ENCODE measurements at regions of chr1 and their contacts with region 1.

Region 1: DNA sequence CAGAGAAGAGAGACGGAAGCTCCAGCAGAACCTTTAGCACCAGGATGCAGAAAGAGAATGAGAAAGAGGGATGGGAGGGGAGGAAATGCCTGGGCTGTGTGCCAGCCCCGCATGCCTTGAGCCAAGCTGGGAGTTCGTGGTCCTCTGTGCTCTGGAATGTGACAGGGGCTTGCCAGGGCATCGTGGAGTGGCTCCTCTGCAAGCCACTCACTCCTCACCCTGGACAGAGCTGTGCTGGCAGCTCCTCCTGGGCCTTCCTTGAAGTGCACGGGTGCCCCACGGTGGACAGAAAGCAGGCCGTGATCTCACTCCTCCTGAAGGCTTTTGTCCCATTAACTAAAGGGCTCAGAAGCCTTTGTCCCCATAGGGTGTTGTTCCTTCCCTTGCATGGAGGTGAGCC is 34.8 kb upstream of the PRELP start:
- DNase-seq: peak; percentile 95
- H3K4me3 ChIP-seq: no peak overlapping the region
- H3K27ac ChIP-seq: peak overlapping the region; percentile 34 to 68 (median 53)
- H3K4me1 ChIP-seq: peaks cover 0 to 33% (median 29%) of the 10 kb centered on the region in 4 donors
- H3K27me3 ChIP-seq: no peaks in the 10 kb centered on the region
- CTCF ChIP-seq: peak; percentile 69 to 83 (median 76)
- EP300 ChIP-seq: no peak
- POLR2A ChIP-seq: no peak

Region 2: GRCh38 chr1:203267347-203267846 is 173.4 kb before region 1 on chr1:
- intact Hi-C with region 1: loop called (anchors 1 kb)
- DNase-seq: peak; percentile 93
- H3K4me3 ChIP-seq: peak overlapping the region; percentile 32 to 58 (median 57)
- H3K27ac ChIP-seq: peak overlapping the region; percentile 77 to 89 (median 86)
- H3K4me1 ChIP-seq: peaks cover 0 to 20% (median 6%) of the 10 kb centered on the region in 4 donors
- H3K27me3 ChIP-seq: no peaks in the 10 kb centered on the region
- CTCF ChIP-seq: peak; percentile 87 to 95 (median 92)
- EP300 ChIP-seq: no peak
- POLR2A ChIP-seq: no peak

Region 3: DNA sequence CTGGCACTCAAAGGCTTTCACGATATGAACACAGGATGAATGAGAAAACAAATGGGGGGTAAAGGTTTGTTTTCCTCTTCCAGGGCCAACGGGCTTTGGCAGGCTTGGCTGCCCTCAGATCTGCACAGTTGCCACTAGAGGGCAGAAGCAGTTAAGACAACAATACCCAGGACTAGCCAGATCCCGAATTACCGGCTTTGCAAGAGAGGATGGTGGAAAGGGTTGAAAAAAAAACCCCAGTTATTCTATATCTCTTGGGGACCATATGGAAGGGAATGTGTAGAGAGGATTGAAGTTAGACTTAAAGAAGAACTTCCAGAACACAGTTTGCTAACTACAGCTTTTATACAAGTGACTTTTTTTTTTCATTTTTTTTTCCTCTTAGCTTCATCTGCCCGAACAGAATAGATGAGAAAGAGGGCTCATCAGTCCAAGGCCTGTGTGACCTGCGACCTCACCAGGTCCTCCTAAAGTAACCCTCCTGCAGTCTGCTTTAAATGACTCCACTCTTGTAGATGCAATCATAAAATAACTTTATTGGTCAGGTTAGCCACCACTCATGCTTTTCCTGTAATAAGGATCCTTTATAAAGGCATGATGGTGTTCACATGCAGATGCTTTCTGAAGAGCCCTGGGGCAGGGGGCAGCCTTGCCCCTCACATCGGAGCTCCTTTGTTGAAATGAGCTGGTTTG is 100.5 kb before region 1 on chr1:
- intact Hi-C with region 1: loop called (anchors 1 kb)
- DNase-seq: peak; percentile 89
- H3K4me3 ChIP-seq: no peak overlapping the region
- H3K27ac ChIP-seq: no peak overlapping the region
- H3K4me1 ChIP-seq: peaks cover 0 to 15% (median 7%) of the 10 kb centered on the region in 4 donors
- H3K27me3 ChIP-seq: no peaks in the 10 kb centered on the region
- CTCF ChIP-seq: peak; percentile 82 to 90 (median 86)
- EP300 ChIP-seq: no peak
- POLR2A ChIP-seq: no peak

Region 4: DNA sequence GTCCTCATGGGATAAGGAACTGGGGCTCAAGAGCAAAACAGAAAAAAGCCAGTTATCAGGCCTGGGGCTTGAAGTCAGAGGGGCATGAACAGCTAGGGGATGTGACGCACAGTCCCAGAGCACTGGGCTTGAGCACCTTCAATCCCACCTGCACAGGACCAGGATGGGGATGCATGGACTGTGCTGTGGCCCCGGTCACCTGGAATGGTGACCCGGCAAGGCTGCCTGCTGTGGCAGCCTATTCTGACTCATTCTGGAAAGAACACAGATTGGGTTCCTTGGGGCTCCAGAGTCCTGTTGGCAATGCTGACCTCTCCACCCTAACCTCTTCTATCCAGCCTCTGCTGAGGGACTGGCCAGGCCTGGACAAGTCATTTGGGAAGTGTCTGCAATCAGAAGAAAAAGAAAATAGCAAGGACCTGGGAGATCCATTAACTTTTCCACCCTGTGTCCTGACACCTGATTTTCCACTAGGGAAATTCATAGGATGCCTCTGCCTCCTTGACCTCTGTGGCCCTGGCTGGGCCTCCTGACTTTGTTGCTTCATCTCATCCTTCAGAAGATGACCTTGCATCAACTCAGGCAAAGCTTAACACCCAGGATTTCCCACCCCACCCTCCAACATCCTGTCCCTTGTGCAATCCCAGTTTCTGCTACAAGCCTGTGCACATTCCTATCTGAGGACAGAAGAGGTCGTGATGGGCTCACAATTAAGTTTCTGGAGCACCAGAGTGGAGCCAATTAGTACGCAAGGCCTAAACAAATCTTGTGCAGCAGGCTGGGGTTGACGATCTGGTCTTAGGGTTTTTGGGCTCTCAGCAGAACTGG is 71.9 kb before region 1 on chr1:
- intact Hi-C with region 1: loop called (anchors 1 kb)
- DNase-seq: peak; percentile 94
- H3K4me3 ChIP-seq: no peak overlapping the region
- H3K27ac ChIP-seq: peak overlapping the region; percentile 46 to 55 (median 50)
- H3K4me1 ChIP-seq: peaks cover 0 to 21% (median 14%) of the 10 kb centered on the region in 4 donors
- H3K27me3 ChIP-seq: no peaks in the 10 kb centered on the region
- CTCF ChIP-seq: peak in 3 of 4 experiments; percentile 23 to 48 (median 38)
- EP300 ChIP-seq: no peak
- POLR2A ChIP-seq: no peak

Region 5: GRCh38 chr1:203408486-203409427 is 32.0 kb before region 1 on chr1:
- intact Hi-C with region 1: loop called (anchors 2 kb)
- DNase-seq: peak; percentile 97
- H3K4me3 ChIP-seq: peak overlapping the region in 1 of 4 donors; percentile 5
- H3K27ac ChIP-seq: peak overlapping the region; percentile 76 to 90 (median 84)
- H3K4me1 ChIP-seq: peaks cover 0 to 70% (median 63%) of the 10 kb centered on the region in 4 donors
- H3K27me3 ChIP-seq: no peaks in the 10 kb centered on the region
- CTCF ChIP-seq: no peak
- EP300 ChIP-seq: peak in 2 of 4 donors; percentile 55 to 87
- POLR2A ChIP-seq: peak in 1 of 2 donors; percentile 22

Region 6: DNA sequence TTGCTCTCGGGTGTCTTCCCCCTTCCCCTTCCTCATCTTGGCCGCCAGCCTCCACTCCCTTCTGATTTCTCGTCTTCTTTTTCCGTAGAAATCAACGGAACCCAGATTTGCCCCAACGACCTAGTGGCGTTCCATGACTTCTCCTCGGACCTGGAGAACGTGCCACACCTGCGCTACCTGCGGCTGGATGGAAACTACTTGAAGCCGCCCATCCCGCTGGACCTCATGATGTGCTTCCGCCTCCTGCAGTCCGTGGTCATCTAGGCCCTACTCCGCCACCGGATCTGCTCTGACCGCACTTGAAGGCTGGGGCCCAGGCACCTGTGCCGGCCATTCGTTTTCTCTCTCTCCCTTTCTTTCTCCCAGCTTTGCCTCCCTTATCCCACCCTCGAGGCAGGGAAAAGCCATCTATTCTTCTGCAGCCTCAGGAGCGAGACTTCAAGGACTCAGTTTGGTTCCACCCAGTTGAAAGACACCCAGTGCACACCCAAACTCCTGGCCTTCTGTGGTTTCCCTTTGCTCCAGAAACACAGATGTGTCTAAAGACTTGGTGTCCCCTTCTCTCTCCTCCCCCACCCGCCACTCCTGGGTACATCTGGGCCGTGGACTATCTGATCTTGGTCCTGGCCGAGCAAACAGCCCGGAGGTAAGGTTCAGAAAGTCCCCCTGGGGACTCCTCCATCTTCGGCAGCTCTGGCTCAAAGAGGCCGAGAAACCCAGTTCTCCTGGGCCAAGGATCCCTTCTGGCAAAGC is 46.0 kb after region 1 on chr1:
- intact Hi-C with region 1: loop called (anchors 2 kb)
- DNase-seq: peak; percentile 77
- H3K4me3 ChIP-seq: peak overlapping the region in 3 of 4 donors; percentile 4 to 32 (median 24)
- H3K27ac ChIP-seq: peak overlapping the region; percentile 82 to 96 (median 89)
- H3K4me1 ChIP-seq: peaks cover 0 to 69% (median 56%) of the 10 kb centered on the region in 4 donors
- H3K27me3 ChIP-seq: no peaks in the 10 kb centered on the region
- CTCF ChIP-seq: no peak
- EP300 ChIP-seq: no peak
- POLR2A ChIP-seq: peak in 1 of 2 donors; percentile 10